MCF 10A (cell line): ENCODE measurements at regions of chr20 and their contacts with region 1.

Region 1: GRCh38 chr20:10864076-10864918 is 190.5 kb upstream of the JAG1 start:
- DNase-seq: peak; percentile 45
- H3K4me3 Mint-ChIP-seq: peak overlapping the region; percentile 54
- H3K27ac Mint-ChIP-seq: peak overlapping the region; percentile 91
- H3K4me1 Mint-ChIP-seq: peaks cover 56% of the 10 kb centered on the region
- H3K27me3 Mint-ChIP-seq: no peaks in the 10 kb centered on the region
- CTCF ChIP-seq: no peak

Region 2: DNA sequence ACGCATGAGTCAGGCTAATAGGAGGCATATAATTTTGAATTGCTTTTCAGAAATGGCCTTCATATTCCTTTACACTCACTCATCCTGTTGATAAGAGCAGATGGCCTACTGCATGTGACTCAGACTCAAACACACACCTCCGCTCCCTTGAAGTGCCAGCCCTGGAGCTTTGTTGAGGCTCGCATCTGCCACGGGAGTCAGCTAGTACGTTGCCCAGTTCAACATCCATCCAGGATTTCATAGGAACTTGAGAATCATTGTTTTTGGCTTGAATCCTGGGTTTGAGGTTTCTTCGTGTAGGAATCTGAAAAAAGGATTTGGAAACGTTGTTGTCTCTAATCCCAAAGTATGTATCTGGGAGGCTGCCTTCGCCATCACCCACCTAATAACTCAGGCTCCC is 103.1 kb before region 1 on chr20:
- CTCF ChIA-PET with region 1: no interaction called
- POLR2A ChIA-PET with region 1: interaction called, 10 read pairs
- intact Hi-C with region 1: loop called (anchors 5 kb)
- DNase-seq: peak; percentile 97
- H3K4me3 Mint-ChIP-seq: peak overlapping the region; percentile 37
- H3K27ac Mint-ChIP-seq: no peak overlapping the region
- H3K4me1 Mint-ChIP-seq: peaks cover 18% of the 10 kb centered on the region
- H3K27me3 Mint-ChIP-seq: no peaks in the 10 kb centered on the region
- CTCF ChIP-seq: no peak

Region 3: GRCh38 chr20:10922941-10923340 is 58.6 kb after region 1 on chr20:
- CTCF ChIA-PET with region 1: no interaction called
- POLR2A ChIA-PET with region 1: interaction called, 4 read pairs
- intact Hi-C with region 1: loop called (anchors 5 kb)
- DNase-seq: peak; percentile 85
- H3K4me3 Mint-ChIP-seq: peak overlapping the region; percentile 24
- H3K27ac Mint-ChIP-seq: peak overlapping the region; percentile 50
- H3K4me1 Mint-ChIP-seq: peaks cover 46% of the 10 kb centered on the region
- H3K27me3 Mint-ChIP-seq: no peaks in the 10 kb centered on the region
- CTCF ChIP-seq: no peak

Region 4: DNA sequence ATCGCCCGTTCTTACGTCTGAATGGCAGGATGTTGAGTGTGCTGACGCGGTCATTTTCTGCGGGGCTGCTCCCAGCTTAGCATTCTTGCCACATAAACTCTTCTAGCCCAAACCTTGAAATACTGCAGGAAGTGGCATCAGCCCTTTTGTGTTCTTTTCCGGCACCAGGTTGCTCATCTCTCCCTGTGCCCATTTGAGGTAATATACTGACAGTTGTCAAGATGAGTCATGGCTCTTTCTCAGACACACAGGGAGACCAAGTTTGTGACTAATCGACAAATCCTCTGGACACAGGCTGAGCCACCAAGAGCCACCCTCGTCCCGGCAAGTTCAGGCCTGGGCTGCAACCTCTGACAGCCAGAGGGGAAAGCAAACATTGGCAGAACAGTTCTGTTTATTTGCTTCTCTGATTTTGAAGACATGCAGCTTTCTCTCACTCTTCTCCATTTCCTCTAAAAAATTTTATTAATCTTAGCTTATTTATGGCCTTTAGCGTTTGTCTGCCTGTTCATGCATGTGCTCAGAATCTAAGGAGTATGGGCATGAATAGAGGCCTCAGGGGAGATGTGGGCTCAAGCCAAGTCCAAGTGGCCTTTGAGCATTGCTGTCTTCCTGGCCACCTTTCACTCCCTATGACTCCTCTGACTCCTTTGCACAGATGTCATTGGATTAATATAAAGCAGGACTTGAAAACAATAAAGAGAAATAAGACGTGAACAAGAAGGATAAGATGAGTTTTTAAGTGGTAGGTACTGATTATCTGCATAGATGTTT is 137.7 kb after region 1 on chr20:
- CTCF ChIA-PET with region 1: no interaction called
- POLR2A ChIA-PET with region 1: interaction called, 5 read pairs
- intact Hi-C with region 1: loop called (anchors 5 kb)
- DNase-seq: peak; percentile 99
- H3K4me3 Mint-ChIP-seq: peak overlapping the region; percentile 33
- H3K27ac Mint-ChIP-seq: peak overlapping the region; percentile 91
- H3K4me1 Mint-ChIP-seq: peaks cover 28% of the 10 kb centered on the region
- H3K27me3 Mint-ChIP-seq: no peaks in the 10 kb centered on the region
- CTCF ChIP-seq: no peak

Region 5: GRCh38 chr20:11204926-11205768 is 340.9 kb after region 1 on chr20:
- CTCF ChIA-PET with region 1: interaction called, 3 read pairs
- POLR2A ChIA-PET with region 1: interaction called, 4 read pairs
- intact Hi-C with region 1: loop called (anchors 10 kb)
- DNase-seq: peak; percentile 81
- H3K4me3 Mint-ChIP-seq: no peak overlapping the region
- H3K27ac Mint-ChIP-seq: no peak overlapping the region
- H3K4me1 Mint-ChIP-seq: peaks cover 33% of the 10 kb centered on the region
- H3K27me3 Mint-ChIP-seq: no peaks in the 10 kb centered on the region
- CTCF ChIP-seq: peak; percentile 58

Region 6: DNA sequence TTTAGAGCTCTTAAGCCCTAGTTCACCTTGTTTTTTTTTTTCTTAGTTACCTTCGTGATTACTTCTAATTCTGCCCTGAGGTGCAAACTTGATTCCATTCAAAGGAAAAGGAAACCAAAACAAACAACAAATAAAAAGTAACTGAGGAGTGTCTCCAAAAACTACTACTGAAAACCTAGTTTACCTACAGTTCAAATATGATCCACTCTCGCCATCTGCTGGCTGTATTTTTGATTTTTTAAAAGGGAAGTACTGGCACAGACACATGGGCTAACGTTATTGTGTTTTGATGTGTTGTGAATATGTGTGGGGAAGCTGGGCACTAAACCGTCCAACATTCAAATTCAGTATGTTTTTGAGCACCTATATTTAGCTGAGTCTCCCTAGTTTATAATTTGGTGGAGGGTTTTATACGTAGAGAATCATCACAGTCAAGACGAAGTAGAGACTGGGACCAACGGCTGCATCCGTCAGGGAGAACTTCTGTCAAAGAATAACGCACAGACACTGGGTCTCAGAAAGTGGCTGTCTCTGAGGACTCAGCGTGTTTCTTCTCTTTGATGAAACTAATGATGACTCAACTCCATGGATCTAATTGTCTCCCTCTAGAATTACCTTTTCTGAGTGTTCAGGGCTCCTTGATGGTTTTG is 679.9 kb after region 1 on chr20:
- CTCF ChIA-PET with region 1: no interaction called
- POLR2A ChIA-PET with region 1: no interaction called
- intact Hi-C with region 1: loop called (anchors 10 kb)
- DNase-seq: peak; percentile 75
- H3K4me3 Mint-ChIP-seq: no peak overlapping the region
- H3K27ac Mint-ChIP-seq: no peak overlapping the region
- H3K4me1 Mint-ChIP-seq: no peaks in the 10 kb centered on the region
- H3K27me3 Mint-ChIP-seq: no peaks in the 10 kb centered on the region
- CTCF ChIP-seq: peak; percentile 73